ENCODE measurements at regions of chr14 and their contacts with region 1.

Region 1: GRCh38 chr14:105020815-105021655 is at the start of gene CDCA4:
- DNase-seq: peak; percentile 94 to 98 (median 97)
- H3K4me3 ChIP-seq: peak within 1 kb of the TSS; percentile 69 to 71
- H3K4me3 Mint-ChIP-seq: peak within 1 kb of the TSS; percentile 92 to 98 (median 94)
- H3K27ac ChIP-seq: peak within 1 kb of the TSS; percentile 75
- H3K27ac Mint-ChIP-seq: peak within 1 kb of the TSS; percentile 94 to 97 (median 96)
- H3K4me1 ChIP-seq: peaks cover 72% of the 10 kb centered on the region
- H3K4me1 Mint-ChIP-seq: peaks cover 29 to 84% (median 57%) of the 10 kb centered on the region in 4 donors
- H3K27me3 ChIP-seq: no peaks in the 10 kb centered on the region
- H3K27me3 Mint-ChIP-seq: peaks cover 0 to 1% of the 10 kb centered on the region in 2 donors
- total RNA-seq, gene CDCA4: 17.1 to 19.0 TPM

Region 2: GRCh38 chr14:103715052-103716000 is 1305.7 kb before region 1 on chr14 and contains the starts of genes XRCC3 and ZFYVE21:
- CTCF ChIA-PET with region 1: no interaction called
- POLR2A ChIA-PET with region 1: no interaction called
- intact Hi-C with region 1: loop called (anchors 5 kb)
- DNase-seq: peak; percentile 100
- H3K4me3 ChIP-seq: peak within 1 kb of the TSS; percentile 12 to 60
- H3K4me3 Mint-ChIP-seq: peak within 1 kb of the TSS; percentile 89 to 95 (median 93)
- H3K27ac ChIP-seq: peak within 1 kb of the TSS; percentile 49
- H3K27ac Mint-ChIP-seq: peak within 1 kb of the TSS; percentile 86 to 98 (median 93)
- H3K4me1 ChIP-seq: peaks cover 21% of the 10 kb centered on the region
- H3K4me1 Mint-ChIP-seq: peaks cover 17 to 72% (median 40%) of the 10 kb centered on the region in 4 donors
- H3K27me3 ChIP-seq: no peaks in the 10 kb centered on the region
- H3K27me3 Mint-ChIP-seq: no peaks in the 10 kb centered on the region
- total RNA-seq, gene XRCC3: 10.3 to 12.6 TPM
- total RNA-seq, gene ZFYVE21: 17.4 to 18.8 TPM

Region 3: DNA sequence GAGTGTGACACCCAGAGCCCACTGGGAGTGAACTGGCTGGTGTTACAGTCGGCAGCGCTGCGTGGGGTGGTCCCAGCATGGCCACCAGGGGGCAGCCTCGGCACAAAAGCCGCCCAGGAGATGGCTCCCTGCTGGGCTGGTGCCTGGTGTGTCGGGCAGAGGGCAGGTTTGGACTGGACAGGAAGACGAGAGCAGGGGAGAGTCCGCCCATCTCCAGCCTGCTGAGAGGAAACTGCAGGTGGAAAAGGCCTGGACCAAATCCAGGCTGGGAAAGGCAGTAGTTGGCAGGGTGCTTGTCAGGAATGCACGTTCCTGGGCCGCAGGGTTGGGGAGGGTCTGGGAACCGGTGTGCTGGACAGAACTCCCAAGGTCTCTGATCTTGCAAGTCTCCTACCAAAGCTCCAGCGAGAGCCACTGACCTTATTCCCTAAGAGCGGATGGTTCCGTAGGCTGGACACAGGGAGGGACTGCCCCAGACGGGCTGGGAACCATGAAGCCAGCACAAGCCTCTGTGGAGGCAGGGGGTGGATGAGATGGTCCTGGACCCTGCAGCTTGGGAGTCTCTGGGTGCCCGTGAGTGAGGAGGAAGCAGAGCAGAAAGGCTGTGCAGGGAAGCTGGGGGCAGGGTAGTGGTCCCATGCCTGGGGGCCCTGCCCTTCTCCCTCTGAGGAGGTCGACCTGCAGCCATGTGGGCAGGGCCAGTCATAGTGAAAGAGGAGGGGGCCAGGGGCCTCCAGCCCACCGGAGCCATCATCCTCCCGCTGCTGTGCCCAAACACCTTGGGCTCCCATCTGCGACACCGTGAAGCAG is 44.6 kb before region 1 on chr14:
- CTCF ChIA-PET with region 1: interaction called, 3 read pairs
- POLR2A ChIA-PET with region 1: interaction called, 4 read pairs
- intact Hi-C with region 1: loop called (anchors 2 kb)
- DNase-seq: peak; percentile 80 to 87 (median 82)
- H3K4me3 ChIP-seq: no peak overlapping the region
- H3K4me3 Mint-ChIP-seq: peak overlapping the region; percentile 35 to 88 (median 64)
- H3K27ac ChIP-seq: no peak overlapping the region
- H3K27ac Mint-ChIP-seq: peak overlapping the region in 5 of 7 donors; percentile 19 to 66 (median 56)
- H3K4me1 ChIP-seq: peaks cover 17% of the 10 kb centered on the region
- H3K4me1 Mint-ChIP-seq: peaks cover 4 to 26% (median 13%) of the 10 kb centered on the region in 4 donors
- H3K27me3 ChIP-seq: peaks cover 13% of the 10 kb centered on the region
- H3K27me3 Mint-ChIP-seq: peaks cover 8 to 18% of the 10 kb centered on the region in 2 donors

Region 4: GRCh38 chr14:105034314-105035039 is 13.4 kb after region 1 on chr14:
- CTCF ChIA-PET with region 1: interaction called, 9 read pairs
- POLR2A ChIA-PET with region 1: interaction called, 24 read pairs
- intact Hi-C with region 1: loop called (anchors 1 kb)
- DNase-seq: no peak
- H3K4me3 ChIP-seq: no peak overlapping the region
- H3K4me3 Mint-ChIP-seq: peak overlapping the region in 7 of 8 donors; percentile 28 to 94 (median 53)
- H3K27ac ChIP-seq: no peak overlapping the region
- H3K27ac Mint-ChIP-seq: peak overlapping the region in 5 of 7 donors; percentile 54 to 94 (median 64)
- H3K4me1 ChIP-seq: peaks cover 7% of the 10 kb centered on the region
- H3K4me1 Mint-ChIP-seq: peaks cover 6 to 32% (median 20%) of the 10 kb centered on the region in 4 donors
- H3K27me3 ChIP-seq: no peaks in the 10 kb centered on the region
- H3K27me3 Mint-ChIP-seq: no peaks in the 10 kb centered on the region

Region 5: DNA sequence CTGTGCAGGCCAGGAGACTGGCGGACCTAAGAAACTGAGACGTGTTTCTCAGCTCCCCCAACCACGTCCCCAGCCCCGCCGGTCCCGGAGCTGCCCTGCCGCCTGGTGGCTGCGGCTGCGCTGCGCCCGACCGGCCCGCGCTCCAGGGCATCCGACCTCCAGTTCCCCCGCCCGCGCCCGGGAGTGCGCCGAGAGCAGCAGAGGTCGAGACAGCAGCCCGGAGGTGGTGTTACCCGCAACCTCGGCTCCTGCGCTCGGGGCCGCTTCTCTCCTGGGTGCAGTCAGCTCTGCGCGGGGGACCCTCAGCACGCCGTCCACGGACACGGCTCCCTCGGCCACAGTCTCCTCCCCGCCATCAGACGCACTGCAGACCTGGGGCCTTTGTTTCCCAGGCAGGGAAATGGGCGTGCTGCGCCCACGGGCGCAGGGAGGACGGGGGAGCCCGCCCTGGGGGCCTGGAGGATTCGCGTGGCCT is 65.8 kb after region 1 on chr14:
- CTCF ChIA-PET with region 1: interaction called, 4 read pairs
- POLR2A ChIA-PET with region 1: interaction called, 6 read pairs
- intact Hi-C with region 1: loop called (anchors 2 kb)
- DNase-seq: peak; percentile 81 to 87 (median 84)
- H3K4me3 ChIP-seq: peak overlapping the region; percentile 23 to 57
- H3K4me3 Mint-ChIP-seq: peak overlapping the region; percentile 71 to 83 (median 78)
- H3K27ac ChIP-seq: peak overlapping the region; percentile 26
- H3K27ac Mint-ChIP-seq: peak overlapping the region in 3 of 7 donors; percentile 15 to 91 (median 77)
- H3K4me1 ChIP-seq: peaks cover 23% of the 10 kb centered on the region
- H3K4me1 Mint-ChIP-seq: peaks cover 13 to 24% (median 16%) of the 10 kb centered on the region in 4 donors
- H3K27me3 ChIP-seq: no peaks in the 10 kb centered on the region
- H3K27me3 Mint-ChIP-seq: peaks cover 0 to 1% of the 10 kb centered on the region in 2 donors

Region 6: DNA sequence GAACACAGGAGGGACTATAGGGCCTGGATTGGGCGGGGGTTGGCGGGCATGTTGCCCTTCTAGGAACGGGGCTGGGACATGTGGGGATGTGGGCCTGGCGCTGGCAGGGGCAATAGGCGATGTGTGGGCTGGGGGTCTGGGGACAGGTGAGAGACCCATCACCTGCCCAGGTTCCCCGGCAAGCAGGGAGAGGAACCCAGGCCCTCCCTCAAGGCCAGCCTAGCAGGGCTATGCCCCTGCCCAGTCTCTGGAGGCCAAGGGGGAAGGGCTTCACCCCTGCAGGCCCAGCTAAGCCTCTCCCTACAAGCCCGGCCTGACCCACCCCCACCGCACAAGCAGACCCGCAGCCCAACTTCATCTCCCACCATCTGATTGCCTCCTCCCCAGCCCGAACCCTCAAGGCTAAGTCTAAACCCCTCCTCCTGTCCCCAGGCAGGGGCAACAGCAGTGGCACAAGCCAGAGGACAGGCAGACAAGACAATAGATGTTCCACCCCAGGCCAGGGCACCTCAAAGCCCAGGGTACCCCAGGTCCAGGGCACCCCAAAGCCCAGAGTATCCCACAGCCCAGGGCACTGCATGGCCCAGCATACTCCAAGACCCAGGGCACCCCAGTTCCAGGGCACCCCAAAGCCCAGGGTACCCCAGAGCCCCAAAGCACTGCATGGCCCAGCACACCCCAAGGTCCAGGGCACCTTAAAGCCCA is 141.1 kb after region 1 on chr14:
- CTCF ChIA-PET with region 1: no interaction called
- POLR2A ChIA-PET with region 1: no interaction called
- intact Hi-C with region 1: no loop called
- DNase-seq: peak in 1 of 5 donors; percentile 49
- H3K4me3 ChIP-seq: no peak overlapping the region
- H3K4me3 Mint-ChIP-seq: peak overlapping the region in 1 of 8 donors; percentile 20
- H3K27ac ChIP-seq: no peak overlapping the region
- H3K27ac Mint-ChIP-seq: no peak overlapping the region
- H3K4me1 ChIP-seq: no peaks in the 10 kb centered on the region
- H3K4me1 Mint-ChIP-seq: peaks cover 0 to 1% (median 0%) of the 10 kb centered on the region in 4 donors
- H3K27me3 ChIP-seq: no peaks in the 10 kb centered on the region
- H3K27me3 Mint-ChIP-seq: peaks cover 2 to 6% of the 10 kb centered on the region in 2 donors

Measured in CD4-positive, alpha-beta memory T cell (primary cell).